Activated CD8-positive, alpha-beta T cell treated with anti-CD3 and anti-CD28 coated beads, Interleukin-2, amount 10 ng/mL, durations not matched to agents 7 days and 5 days (primary cell): ENCODE measurements at regions of chr1 and their contacts with region 1.

Region 1: DNA sequence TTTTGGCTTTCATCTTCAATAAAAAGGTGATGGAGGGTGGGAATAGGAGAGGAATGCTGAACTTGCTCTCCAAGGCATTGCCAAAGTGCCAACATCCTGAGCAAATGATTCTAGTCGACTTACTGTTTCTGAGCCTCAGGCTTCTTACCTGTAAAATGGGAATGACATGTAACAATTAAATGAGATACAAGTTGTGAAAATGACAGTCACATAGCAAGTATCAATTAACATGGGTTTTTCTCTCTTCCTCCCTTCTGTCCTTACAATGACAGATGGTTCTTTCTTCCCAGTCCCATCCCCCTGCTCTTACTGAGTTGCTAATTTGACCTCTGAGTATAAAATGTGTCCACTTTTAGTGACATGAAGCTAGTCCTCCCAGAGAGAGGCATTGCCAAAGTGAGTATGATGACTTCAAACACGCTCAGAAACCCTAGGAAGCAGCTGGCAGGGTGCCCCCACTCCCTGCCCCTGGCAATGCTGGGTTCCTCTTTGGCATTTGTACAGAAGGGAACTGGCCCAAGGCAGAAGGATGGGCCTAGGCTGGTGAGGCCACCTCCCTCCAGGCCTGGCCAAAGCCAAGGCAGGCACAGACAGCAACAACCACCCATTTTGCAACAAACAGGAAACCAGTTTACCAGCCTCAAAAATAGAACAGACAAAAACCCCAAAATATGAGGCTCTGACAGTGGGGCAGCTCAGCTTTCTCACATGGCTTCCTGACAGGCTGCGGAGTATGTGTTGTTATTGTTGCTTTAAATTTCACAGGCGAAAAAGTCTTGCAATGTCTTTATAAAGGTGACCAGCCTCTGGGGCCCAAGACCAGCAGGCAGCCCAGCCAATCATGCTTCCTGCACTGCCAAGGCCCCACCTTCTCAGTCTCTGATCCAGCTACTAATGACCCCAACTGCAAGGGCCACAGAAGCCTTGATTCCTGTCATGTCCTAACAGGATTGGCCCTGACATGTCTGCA is 115.9 kb downstream of the HIVEP3 start:
- DNase-seq: peak; percentile 58
- ATAC-seq: peak; percentile 50
- H3K4me3 Mint-ChIP-seq: peak overlapping the region; percentile 48
- H3K27ac Mint-ChIP-seq: peak overlapping the region; percentile 86
- H3K4me1 Mint-ChIP-seq: peaks cover 92% of the 10 kb centered on the region
- H3K27me3 Mint-ChIP-seq: no peaks in the 10 kb centered on the region

Region 2: GRCh38 chr1:41739061-41739955 is 63.5 kb before region 1 on chr1:
- CTCF ChIA-PET with region 1: interaction called, 10 read pairs
- POLR2A ChIA-PET with region 1: interaction called, 3 read pairs
- DNase-seq: peak; percentile 73
- ATAC-seq: peak; percentile 71
- H3K4me3 Mint-ChIP-seq: peak overlapping the region; percentile 50
- H3K27ac Mint-ChIP-seq: peak overlapping the region; percentile 81
- H3K4me1 Mint-ChIP-seq: peaks cover 47% of the 10 kb centered on the region
- H3K27me3 Mint-ChIP-seq: no peaks in the 10 kb centered on the region

Region 3: GRCh38 chr1:41780916-41781315 is 21.9 kb before region 1 on chr1:
- CTCF ChIA-PET with region 1: interaction called, 12 read pairs
- POLR2A ChIA-PET with region 1: no interaction called
- DNase-seq: no peak
- ATAC-seq: no peak
- H3K4me3 Mint-ChIP-seq: no peak overlapping the region
- H3K27ac Mint-ChIP-seq: no peak overlapping the region
- H3K4me1 Mint-ChIP-seq: peaks cover 25% of the 10 kb centered on the region
- H3K27me3 Mint-ChIP-seq: no peaks in the 10 kb centered on the region

Region 4: GRCh38 chr1:41791667-41792484 is 10.9 kb before region 1 on chr1:
- CTCF ChIA-PET with region 1: interaction called, 19 read pairs
- POLR2A ChIA-PET with region 1: interaction called, 10 read pairs
- DNase-seq: peak; percentile 68
- ATAC-seq: peak; percentile 78
- H3K4me3 Mint-ChIP-seq: peak overlapping the region; percentile 42
- H3K27ac Mint-ChIP-seq: peak overlapping the region; percentile 95
- H3K4me1 Mint-ChIP-seq: peaks cover 56% of the 10 kb centered on the region
- H3K27me3 Mint-ChIP-seq: no peaks in the 10 kb centered on the region

Region 5: GRCh38 chr1:41898191-41898713 is 95.4 kb after region 1 on chr1:
- CTCF ChIA-PET with region 1: no interaction called
- POLR2A ChIA-PET with region 1: no interaction called
- DNase-seq: peak; percentile 92
- ATAC-seq: peak; percentile 88
- H3K4me3 Mint-ChIP-seq: peak overlapping the region; percentile 65
- H3K27ac Mint-ChIP-seq: peak overlapping the region; percentile 98
- H3K4me1 Mint-ChIP-seq: peaks cover 74% of the 10 kb centered on the region
- H3K27me3 Mint-ChIP-seq: no peaks in the 10 kb centered on the region